Calu3 (cell line): ENCODE measurements at regions of chr7 and their contacts with region 1.

Region 1: DNA sequence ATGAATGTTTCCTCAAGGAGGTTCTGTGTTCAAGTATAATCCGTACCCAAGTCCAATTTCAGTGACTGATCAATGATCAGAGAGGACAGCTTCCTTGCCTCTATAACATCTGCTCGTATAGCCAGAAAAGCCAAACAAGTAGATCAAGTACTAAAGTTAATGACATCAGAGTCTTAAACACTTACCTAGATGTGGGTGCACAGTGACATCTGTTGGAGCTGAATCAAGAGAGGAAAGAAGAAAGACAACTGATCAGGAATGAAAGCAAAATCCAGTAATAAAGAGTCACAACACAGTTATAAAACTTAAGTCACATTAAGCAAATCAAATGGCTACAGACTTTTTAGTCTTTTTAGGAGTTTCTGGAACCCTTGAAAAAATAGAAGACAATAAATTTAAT is 236.5 kb downstream of the RELN start:
- DNase-seq: peak; percentile 17
- H3K4me3 Mint-ChIP-seq: no peak overlapping the region
- H3K27ac Mint-ChIP-seq: no peak overlapping the region
- H3K4me1 Mint-ChIP-seq: no peaks in the 10 kb centered on the region
- H3K27me3 Mint-ChIP-seq: no peaks in the 10 kb centered on the region
- CTCF ChIP-seq: no peak

Region 2: GRCh38 chr7:103573479-103574058 is 179.4 kb before region 1 on chr7:
- CTCF ChIA-PET with region 1: interaction called, 14 read pairs
- intact Hi-C with region 1: loop called (anchors 1 kb)
- DNase-seq: no peak
- H3K4me3 Mint-ChIP-seq: no peak overlapping the region
- H3K27ac Mint-ChIP-seq: no peak overlapping the region
- H3K4me1 Mint-ChIP-seq: no peaks in the 10 kb centered on the region
- H3K27me3 Mint-ChIP-seq: no peaks in the 10 kb centered on the region
- CTCF ChIP-seq: no peak

Region 3: GRCh38 chr7:103660455-103661371 is 92.3 kb before region 1 on chr7:
- CTCF ChIA-PET with region 1: interaction called, 3 read pairs
- intact Hi-C with region 1: loop called (anchors 5 kb)
- DNase-seq: peak; percentile 22
- H3K4me3 Mint-ChIP-seq: no peak overlapping the region
- H3K27ac Mint-ChIP-seq: peak overlapping the region; percentile 83
- H3K4me1 Mint-ChIP-seq: peaks cover 52% of the 10 kb centered on the region
- H3K27me3 Mint-ChIP-seq: no peaks in the 10 kb centered on the region
- CTCF ChIP-seq: no peak